Left cardiac atrium (tissue), 4 donors: ENCODE measurements at regions of chr2 and their contacts with region 1.

Region 1: GRCh38 chr2:71798266-71799012 is 345.1 kb downstream of the DYSF start:
- DNase-seq: peak; percentile 43
- ATAC-seq: peak in 1 of 2 donors; percentile 49

Region 2: DNA sequence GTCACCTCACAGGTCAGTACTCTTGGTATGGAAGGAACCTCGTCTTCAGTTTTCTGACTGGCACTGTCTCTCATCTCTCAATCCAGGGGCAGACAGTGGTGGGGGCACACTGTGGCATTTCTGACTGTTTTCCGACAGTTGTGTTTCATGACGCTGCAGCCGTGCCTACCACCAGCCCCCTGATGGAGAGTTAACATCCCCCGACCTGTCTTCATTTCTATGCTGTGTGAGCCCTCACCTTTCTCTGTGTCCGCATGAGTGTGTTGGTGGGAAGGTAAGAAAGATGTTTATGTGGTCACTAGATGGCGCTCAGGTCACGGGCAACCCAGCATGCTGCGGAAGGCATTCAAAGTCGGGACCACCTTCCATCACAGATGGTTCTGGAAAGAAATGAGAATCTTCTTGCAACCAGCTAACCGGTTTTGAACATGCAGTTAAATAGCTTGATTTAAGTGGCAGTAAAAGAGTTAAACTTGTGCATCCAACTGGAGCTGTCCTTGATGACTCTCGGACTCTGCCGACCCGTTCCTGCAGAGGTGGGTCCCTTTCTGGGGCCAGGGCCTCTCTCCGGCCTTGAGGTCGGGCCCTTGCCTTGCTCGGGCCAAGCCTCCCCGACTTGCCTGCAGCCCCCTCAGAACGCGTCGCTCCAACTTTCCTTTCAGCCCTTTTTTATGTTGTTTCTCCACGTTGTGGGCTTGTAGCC is 252.7 kb before region 1 on chr2:
- intact Hi-C with region 1: loop called in 1 of 2 experiments (anchors 5 kb)
- DNase-seq: peak; percentile 56
- ATAC-seq: peak; percentile 68 to 80

Region 3: GRCh38 chr2:71614976-71615766 is 183.3 kb before region 1 on chr2:
- intact Hi-C with region 1: loop called in 1 of 2 experiments (anchors 5 kb)
- DNase-seq: peak; percentile 92
- ATAC-seq: peak; percentile 90 to 92

Region 4: DNA sequence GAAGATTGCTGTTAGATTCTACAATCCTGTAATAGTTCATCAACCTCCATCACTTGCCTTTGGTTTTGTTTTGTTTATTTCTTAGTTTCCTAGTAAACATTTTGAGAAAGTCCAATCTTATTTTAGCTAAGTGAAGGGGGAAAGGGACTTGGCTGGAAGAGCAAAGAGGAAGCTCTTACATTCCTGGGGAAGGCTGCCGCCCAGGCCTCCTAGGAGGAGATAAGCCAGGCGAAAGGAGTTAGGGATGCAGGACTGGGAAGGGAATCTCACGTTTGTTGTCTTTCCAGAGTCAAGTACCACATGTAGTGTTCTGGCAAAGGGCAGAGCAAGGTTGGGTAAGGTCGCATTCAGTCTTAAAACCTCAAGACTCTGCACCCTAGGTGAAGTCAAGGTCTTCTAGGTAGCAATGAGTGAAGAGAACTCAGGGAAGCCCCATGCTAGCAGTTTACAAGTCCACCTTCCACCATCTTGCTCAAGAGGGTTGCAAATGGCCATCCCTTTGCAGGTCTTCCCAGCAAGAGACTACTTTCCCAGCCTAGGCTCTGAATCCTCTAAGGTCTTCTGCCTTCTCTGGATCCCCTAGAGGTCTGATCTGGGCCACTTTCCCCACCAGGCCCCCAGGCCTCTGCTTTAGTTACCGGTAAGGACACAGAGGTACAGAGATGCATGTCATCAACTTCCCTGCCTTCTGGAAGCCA is 28.5 kb after region 1 on chr2:
- intact Hi-C with region 1: loop called in 1 of 2 experiments (anchors 1 kb)
- DNase-seq: no peak
- ATAC-seq: no peak

Region 5: DNA sequence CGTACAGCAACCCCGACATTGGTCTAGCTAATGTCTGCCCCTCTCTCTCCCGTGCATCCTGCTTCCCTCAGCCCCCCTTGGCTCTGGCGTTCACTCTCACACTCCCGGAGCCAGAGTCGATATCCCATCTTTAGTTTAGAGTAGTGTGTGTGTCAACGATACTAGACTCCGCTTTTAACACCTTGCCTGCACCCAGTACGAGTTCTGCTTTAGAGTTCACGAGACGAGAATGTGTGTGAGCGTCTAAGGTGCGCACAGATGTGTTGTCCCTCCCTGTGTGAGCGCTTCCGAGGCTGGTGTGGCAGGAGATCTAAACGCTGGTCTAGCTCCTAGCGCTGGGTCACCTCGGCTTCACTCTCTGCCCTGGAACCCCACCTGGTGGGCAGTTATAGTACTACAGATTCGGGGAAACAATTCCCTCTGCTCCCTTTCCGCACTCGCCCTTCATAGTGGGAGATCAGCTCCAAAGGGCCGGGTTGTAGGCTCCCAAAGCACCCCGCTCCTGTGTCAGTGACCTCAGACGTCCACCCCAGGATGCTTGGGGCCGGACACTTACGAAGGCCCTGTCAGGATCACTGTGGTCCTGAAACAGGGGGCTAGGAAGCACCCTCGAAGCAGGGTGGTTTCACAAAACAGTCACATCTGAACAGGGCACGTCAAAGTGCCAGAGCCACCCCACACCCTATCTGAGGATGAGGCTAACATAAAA is 351.9 kb after region 1 on chr2:
- intact Hi-C with region 1: loop called (anchors 2 to 5 kb)
- DNase-seq: peak; percentile 70
- ATAC-seq: peak; percentile 65 to 77